Gastrocnemius medialis (tissue), 4 donors: ENCODE measurements at regions of chr6 and their contacts with region 1.

Region 1: GRCh38 chr6:15062516-15063252 is 183.2 kb upstream of the JARID2 start:
- DNase-seq: peak; percentile 55 to 74
- ATAC-seq: peak; percentile 92 to 93
- H3K4me3 ChIP-seq: no peak overlapping the region
- H3K27ac ChIP-seq: peak overlapping the region; percentile 80 to 93 (median 84)
- H3K4me1 ChIP-seq: peaks cover 10 to 17% of the 10 kb centered on the region in 2 donors
- H3K27me3 ChIP-seq: no peaks in the 10 kb centered on the region
- CTCF ChIP-seq: no peak
- POLR2A ChIP-seq: no peak

Region 2: DNA sequence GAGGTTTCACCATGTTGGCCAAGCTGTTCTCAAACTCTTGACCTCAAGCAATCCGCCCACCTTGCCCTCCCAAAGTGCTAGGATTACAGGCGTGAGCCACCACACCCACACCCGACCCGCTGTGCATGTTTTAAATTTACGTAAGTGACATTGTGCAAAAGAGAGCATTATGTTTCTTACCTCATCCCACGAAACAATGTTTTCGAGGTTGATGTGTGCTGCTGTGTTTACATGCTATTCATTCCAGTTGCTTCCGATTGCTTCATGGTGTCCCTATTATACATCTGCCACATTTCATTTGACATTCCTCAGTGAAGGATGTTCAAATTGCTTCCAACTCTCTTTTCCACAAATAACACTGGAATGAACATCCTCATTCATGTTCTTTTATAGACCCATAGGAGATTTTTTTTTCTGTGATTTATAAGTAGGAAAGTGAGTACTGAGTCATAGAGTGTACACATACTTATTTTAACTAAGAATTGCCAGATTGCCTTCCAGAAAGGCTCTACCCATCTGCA is 220.7 kb before region 1 on chr6:
- in situ Hi-C with region 1: no loop called
- intact Hi-C with region 1: loop called (anchors 1 kb)
- DNase-seq: peak; percentile 53 to 84
- ATAC-seq: peak; percentile 94 to 96
- H3K4me3 ChIP-seq: no peak overlapping the region
- H3K27ac ChIP-seq: peak overlapping the region in 2 of 4 donors; percentile 36 to 59
- H3K4me1 ChIP-seq: no peaks in the 10 kb centered on the region
- H3K27me3 ChIP-seq: no peaks in the 10 kb centered on the region
- CTCF ChIP-seq: no peak
- POLR2A ChIP-seq: no peak

Region 3: GRCh38 chr6:14889191-14889590 is 173.5 kb before region 1 on chr6:
- in situ Hi-C with region 1: loop called in 1 of 4 experiments (anchors 10 kb)
- intact Hi-C with region 1: loop called (anchors 1 kb)
- DNase-seq: no peak
- ATAC-seq: peak in 1 of 2 donors; percentile 50
- H3K4me3 ChIP-seq: no peak overlapping the region
- H3K27ac ChIP-seq: peak overlapping the region; percentile 84 to 89 (median 86)
- H3K4me1 ChIP-seq: peaks cover 21 to 33% of the 10 kb centered on the region in 2 donors
- H3K27me3 ChIP-seq: no peaks in the 10 kb centered on the region
- CTCF ChIP-seq: peak in 1 of 5 experiments; percentile 3
- POLR2A ChIP-seq: no peak

Region 4: DNA sequence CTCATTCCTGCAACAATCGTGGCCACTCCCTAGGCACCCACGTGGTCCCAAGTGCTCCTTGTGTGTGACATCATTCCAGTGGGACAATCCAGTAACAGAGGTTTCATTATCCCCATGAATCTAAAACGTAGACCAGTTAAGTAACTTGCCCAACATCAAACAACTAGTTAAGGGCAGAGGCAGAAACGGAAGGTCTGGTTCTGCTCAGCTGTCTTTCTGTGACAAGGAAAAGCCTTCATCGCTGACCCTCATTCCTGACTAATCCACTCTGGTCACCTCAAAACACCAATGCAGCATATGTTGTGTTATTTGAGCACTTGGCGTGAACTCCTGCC is 78.2 kb before region 1 on chr6:
- in situ Hi-C with region 1: no loop called
- intact Hi-C with region 1: no loop called
- DNase-seq: peak in 1 of 2 donors; percentile 50
- ATAC-seq: peak; percentile 52 to 84
- H3K4me3 ChIP-seq: peak overlapping the region in 3 of 4 donors; percentile 0 to 13 (median 4)
- H3K27ac ChIP-seq: peak overlapping the region in 1 of 4 donors; percentile 2
- H3K4me1 ChIP-seq: peaks cover 7 to 16% of the 10 kb centered on the region in 2 donors
- H3K27me3 ChIP-seq: no peaks in the 10 kb centered on the region
- CTCF ChIP-seq: no peak
- POLR2A ChIP-seq: no peak

Region 5: DNA sequence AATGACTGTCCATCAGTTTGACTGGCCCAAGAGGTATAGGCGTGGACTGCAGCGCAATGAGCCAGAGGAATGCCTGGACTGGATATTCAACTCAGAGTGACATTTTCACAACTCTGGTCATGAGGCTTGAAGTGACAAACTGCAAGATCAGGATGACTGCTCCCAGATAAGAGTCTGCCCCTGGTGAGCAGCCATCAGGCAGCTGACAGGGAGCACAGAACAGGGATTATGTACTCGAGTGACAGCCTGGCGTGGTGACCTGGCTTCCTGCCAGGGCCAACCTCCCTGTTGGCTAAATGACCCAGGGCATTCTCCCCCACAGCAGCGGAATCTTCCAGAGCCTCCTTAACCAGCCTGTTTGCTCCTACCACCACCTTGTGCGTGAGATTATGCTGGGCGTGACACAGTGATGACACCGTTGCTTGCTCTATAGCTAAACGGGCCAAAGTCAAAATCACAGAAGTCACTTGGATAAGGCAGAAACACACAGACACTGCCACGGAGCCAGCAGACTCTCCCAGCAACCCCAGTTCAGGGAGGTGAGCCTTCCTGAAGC is 25.9 kb before region 1 on chr6:
- in situ Hi-C with region 1: no loop called
- intact Hi-C with region 1: loop called (anchors 1 kb)
- DNase-seq: peak; percentile 93 to 98
- ATAC-seq: peak; percentile 93 to 96
- H3K4me3 ChIP-seq: peak overlapping the region; percentile 33 to 48 (median 38)
- H3K27ac ChIP-seq: peak overlapping the region; percentile 85 to 91 (median 88)
- H3K4me1 ChIP-seq: peaks cover 7 to 27% of the 10 kb centered on the region in 2 donors
- H3K27me3 ChIP-seq: no peaks in the 10 kb centered on the region
- CTCF ChIP-seq: no peak
- POLR2A ChIP-seq: peak; percentile 33 to 63

Region 6: GRCh38 chr6:15254070-15254841 is 191.6 kb after region 1 on chr6:
- in situ Hi-C with region 1: no loop called
- intact Hi-C with region 1: no loop called
- DNase-seq: peak in 1 of 2 donors; percentile 42
- ATAC-seq: peak; percentile 51 to 55
- H3K4me3 ChIP-seq: no peak overlapping the region
- H3K27ac ChIP-seq: peak overlapping the region; percentile 89 to 98 (median 95)
- H3K4me1 ChIP-seq: peaks cover 89 to 93% of the 10 kb centered on the region in 2 donors
- H3K27me3 ChIP-seq: no peaks in the 10 kb centered on the region
- CTCF ChIP-seq: peak in 1 of 5 experiments; percentile 22
- POLR2A ChIP-seq: no peak